CD8-positive, alpha-beta T cell (primary cell): ENCODE measurements at regions of chr3 and their contacts with region 1.

Region 1: GRCh38 chr3:105823149-105823869 is 45.5 kb downstream of the CBLB start:
- DNase-seq: peak in 2 of 9 experiments; percentile 15 to 19
- ATAC-seq: peak; percentile 64
- H3K4me3 ChIP-seq: no peak overlapping the region
- H3K4me3 Mint-ChIP-seq: no peak overlapping the region
- H3K27ac ChIP-seq: peak overlapping the region in 1 of 2 experiments; percentile 49
- H3K27ac Mint-ChIP-seq: peak overlapping the region; percentile 78
- H3K4me1 ChIP-seq: peaks cover 22% of the 10 kb centered on the region
- H3K4me1 Mint-ChIP-seq: peaks cover 75% of the 10 kb centered on the region
- H3K27me3 ChIP-seq: no peaks in the 10 kb centered on the region
- H3K27me3 Mint-ChIP-seq: no peaks in the 10 kb centered on the region
- CTCF ChIP-seq: no peak

Region 2: DNA sequence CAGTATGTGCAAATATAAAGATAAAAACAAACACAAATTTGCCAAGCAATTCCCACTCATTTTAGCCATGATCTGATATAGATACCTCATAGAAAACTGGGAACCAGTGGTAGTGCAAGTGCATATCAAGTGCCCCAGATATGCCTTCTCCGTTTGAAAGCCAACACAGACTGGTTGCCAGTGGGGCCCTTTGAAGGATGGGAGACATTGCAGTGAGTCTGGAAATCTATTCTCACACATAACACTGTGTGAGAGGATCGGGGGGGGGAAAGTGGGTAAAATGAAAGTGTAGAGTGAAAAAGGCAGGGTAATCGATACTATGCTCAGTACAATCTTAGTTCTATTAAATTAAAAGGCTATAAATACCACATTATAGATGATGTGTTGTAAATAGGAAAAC is 37.5 kb before region 1 on chr3:
- CTCF ChIA-PET with region 1: no interaction called
- POLR2A ChIA-PET with region 1: no interaction called
- intact Hi-C with region 1: loop called in 1 of 2 experiments (anchors 5 kb)
- DNase-seq: peak in 1 of 9 experiments; percentile 58
- ATAC-seq: peak; percentile 29
- H3K4me3 ChIP-seq: peak overlapping the region in 1 of 2 experiments; percentile 26
- H3K4me3 Mint-ChIP-seq: no peak overlapping the region
- H3K27ac ChIP-seq: peak overlapping the region in 1 of 2 experiments; percentile 44
- H3K27ac Mint-ChIP-seq: peak overlapping the region; percentile 7
- H3K4me1 ChIP-seq: peaks cover 47% of the 10 kb centered on the region
- H3K4me1 Mint-ChIP-seq: peaks cover 68% of the 10 kb centered on the region
- H3K27me3 ChIP-seq: no peaks in the 10 kb centered on the region
- H3K27me3 Mint-ChIP-seq: no peaks in the 10 kb centered on the region
- CTCF ChIP-seq: no peak

Region 3: DNA sequence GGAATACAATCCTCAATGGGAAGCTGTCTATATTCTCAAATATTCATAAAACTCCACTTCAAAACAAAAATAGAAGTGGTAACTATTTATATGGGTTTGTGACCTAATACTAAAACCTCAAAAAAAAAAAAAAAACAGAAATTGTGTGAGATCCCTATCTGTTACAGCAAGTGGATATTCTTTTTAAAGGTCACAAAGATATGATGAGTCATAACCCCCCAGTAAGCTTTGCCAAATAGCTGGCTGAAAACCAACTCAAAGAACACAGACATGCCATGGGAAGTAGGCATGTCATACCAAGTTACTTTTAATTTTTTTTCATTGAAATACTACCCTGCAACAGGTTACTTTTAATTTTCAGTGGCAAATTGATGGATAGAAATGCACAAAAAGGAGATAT is 16.9 kb before region 1 on chr3:
- CTCF ChIA-PET with region 1: interaction called, 3 read pairs
- POLR2A ChIA-PET with region 1: interaction called, 3 read pairs
- intact Hi-C with region 1: loop called (anchors 1 to 2 kb)
- DNase-seq: peak in 4 of 9 experiments; percentile 25 to 83 (median 58)
- ATAC-seq: peak; percentile 90
- H3K4me3 ChIP-seq: no peak overlapping the region
- H3K4me3 Mint-ChIP-seq: no peak overlapping the region
- H3K27ac ChIP-seq: peak overlapping the region in 1 of 2 experiments; percentile 2
- H3K27ac Mint-ChIP-seq: peak overlapping the region; percentile 60
- H3K4me1 ChIP-seq: peaks cover 23% of the 10 kb centered on the region
- H3K4me1 Mint-ChIP-seq: peaks cover 73% of the 10 kb centered on the region
- H3K27me3 ChIP-seq: no peaks in the 10 kb centered on the region
- H3K27me3 Mint-ChIP-seq: no peaks in the 10 kb centered on the region
- CTCF ChIP-seq: no peak

Region 4: GRCh38 chr3:105862217-105862616 is 38.9 kb after region 1 on chr3:
- CTCF ChIA-PET with region 1: no interaction called
- POLR2A ChIA-PET with region 1: no interaction called
- intact Hi-C with region 1: no loop called
- DNase-seq: peak in 2 of 9 experiments; percentile 30 to 56
- ATAC-seq: peak; percentile 48
- H3K4me3 ChIP-seq: peak overlapping the region; percentile 1 to 19
- H3K4me3 Mint-ChIP-seq: no peak overlapping the region
- H3K27ac ChIP-seq: peak overlapping the region in 1 of 2 experiments; percentile 21
- H3K27ac Mint-ChIP-seq: no peak overlapping the region
- H3K4me1 ChIP-seq: peaks cover 70% of the 10 kb centered on the region
- H3K4me1 Mint-ChIP-seq: peaks cover 56% of the 10 kb centered on the region
- H3K27me3 ChIP-seq: no peaks in the 10 kb centered on the region
- H3K27me3 Mint-ChIP-seq: no peaks in the 10 kb centered on the region
- CTCF ChIP-seq: no peak